Activated T-helper 2 cell treated with anti-CD3 and anti-CD28 coated beads, Interferon-gamma antibody, Interleukin-2, Interleukin-4, amounts not matched to agents 10 μg/mL and 5 μg/mL and 100 μg/mL, durations not matched to agents 14 hours and 24 hours and 36 hours (primary cell): ENCODE measurements at regions of chr13 and their contacts with region 1.

Region 1: DNA sequence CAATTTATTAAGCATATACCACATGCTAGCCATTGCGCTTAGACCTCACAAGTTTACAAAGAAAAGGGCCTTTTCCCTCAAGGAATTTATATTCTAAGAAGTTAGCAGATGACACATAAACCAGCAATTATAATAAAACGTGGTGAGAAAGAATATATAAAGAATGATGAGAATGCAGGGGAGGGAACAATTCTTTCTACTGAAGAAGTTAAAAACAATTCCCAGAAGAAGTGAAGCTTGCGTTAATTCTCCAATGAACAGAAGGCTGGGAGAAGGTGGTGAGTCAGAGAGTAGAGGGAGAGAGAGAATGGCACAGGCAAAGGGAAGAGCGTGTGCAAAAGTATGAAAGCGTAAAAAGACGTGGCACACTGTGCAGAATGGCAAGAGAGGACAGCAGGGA is 69.5 kb upstream of the ZDHHC20 start:
- DNase-seq: no peak
- H3K4me3 Mint-ChIP-seq: no peak overlapping the region
- H3K27ac Mint-ChIP-seq: no peak overlapping the region
- H3K4me1 Mint-ChIP-seq: peaks cover 8% of the 10 kb centered on the region
- H3K27me3 Mint-ChIP-seq: no peaks in the 10 kb centered on the region

Region 2: GRCh38 chr13:21297914-21298831 is 230.4 kb before region 1 on chr13:
- intact Hi-C with region 1: no loop called
- DNase-seq: peak; percentile 83
- H3K4me3 Mint-ChIP-seq: peak overlapping the region; percentile 91
- H3K27ac Mint-ChIP-seq: peak overlapping the region; percentile 87
- H3K4me1 Mint-ChIP-seq: peaks cover 21% of the 10 kb centered on the region
- H3K27me3 Mint-ChIP-seq: peaks cover 3% of the 10 kb centered on the region

Region 3: DNA sequence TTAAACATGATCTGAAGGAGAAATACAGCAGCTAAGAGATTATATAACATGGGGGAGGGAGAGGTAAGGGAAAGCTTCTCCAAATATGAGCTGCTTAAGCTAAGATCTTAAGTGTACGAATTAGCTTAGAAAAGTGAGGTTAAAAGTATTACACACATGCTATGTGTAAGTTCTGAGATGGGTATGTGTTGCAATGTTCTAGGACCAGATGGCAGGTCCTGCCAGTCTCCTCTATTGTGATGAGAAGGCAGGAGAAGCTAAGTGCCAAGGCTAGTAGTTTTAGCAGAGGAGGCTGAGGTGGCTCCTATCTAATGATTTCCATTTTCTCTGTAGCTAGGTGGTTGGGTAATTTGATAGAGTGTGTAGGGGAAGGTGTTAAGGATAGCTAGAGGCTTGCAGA is 17.8 kb after region 1 on chr13:
- intact Hi-C with region 1: loop called (anchors 2 kb)
- DNase-seq: no peak
- H3K4me3 Mint-ChIP-seq: no peak overlapping the region
- H3K27ac Mint-ChIP-seq: no peak overlapping the region
- H3K4me1 Mint-ChIP-seq: no peaks in the 10 kb centered on the region
- H3K27me3 Mint-ChIP-seq: no peaks in the 10 kb centered on the region

Region 4: GRCh38 chr13:21557995-21558394 is 29.4 kb after region 1 on chr13:
- intact Hi-C with region 1: no loop called
- DNase-seq: no peak
- H3K4me3 Mint-ChIP-seq: no peak overlapping the region
- H3K27ac Mint-ChIP-seq: no peak overlapping the region
- H3K4me1 Mint-ChIP-seq: no peaks in the 10 kb centered on the region
- H3K27me3 Mint-ChIP-seq: no peaks in the 10 kb centered on the region

Region 5: DNA sequence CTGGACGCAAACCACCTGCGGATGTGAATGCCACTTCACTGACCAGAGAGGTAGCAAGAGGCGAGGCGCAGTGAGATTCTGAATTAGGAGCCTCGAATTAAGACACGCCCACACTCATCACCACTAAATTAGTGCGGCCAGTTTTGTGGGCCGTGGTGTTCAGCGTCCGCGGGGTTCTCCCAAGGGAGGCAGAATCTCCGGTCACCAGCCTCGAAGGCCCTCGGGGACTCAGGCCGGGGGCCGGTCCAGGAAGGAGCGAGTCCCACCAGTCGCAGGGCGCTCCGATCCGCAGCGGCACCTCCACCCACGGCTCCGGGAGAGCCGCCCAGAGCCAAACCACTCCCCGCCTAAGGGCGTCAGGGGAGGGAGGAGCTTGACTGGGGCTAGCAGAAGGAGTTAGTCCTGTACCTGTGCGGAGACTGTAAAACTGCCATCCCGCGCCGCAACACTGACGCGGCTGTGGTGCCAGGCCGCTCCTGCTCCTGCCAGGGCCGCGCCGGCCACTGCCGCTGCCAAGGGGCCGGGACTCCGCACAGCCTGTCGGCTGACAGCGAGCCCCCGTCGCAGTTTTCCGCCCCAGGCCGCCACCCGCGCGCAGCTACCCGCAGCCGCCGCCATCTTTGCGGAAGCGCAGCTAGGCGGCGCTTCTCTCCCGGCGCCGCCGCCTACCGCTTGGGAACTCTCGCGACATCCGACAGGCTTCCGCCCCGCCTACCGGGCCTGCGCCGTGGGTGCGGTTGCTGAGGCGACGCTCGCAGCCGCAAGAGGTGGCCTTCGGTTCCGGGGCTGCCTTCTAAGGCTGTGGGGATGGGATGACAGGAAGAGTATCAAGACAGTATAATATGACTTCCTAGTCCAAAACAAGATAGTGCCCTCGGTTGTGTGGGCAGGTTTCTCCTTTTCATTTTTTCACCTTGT is 75.2 kb after region 1 on chr13 and contains the start of gene MICU2:
- intact Hi-C with region 1: loop called (anchors 1 kb)
- DNase-seq: peak; percentile 94
- H3K4me3 Mint-ChIP-seq: peak within 1 kb of the TSS; percentile 81
- H3K27ac Mint-ChIP-seq: peak within 1 kb of the TSS; percentile 85
- H3K4me1 Mint-ChIP-seq: peaks cover 22% of the 10 kb centered on the region
- H3K27me3 Mint-ChIP-seq: peaks cover 11% of the 10 kb centered on the region
- total RNA-seq, gene MICU2: 36.6 and 38.8 TPM in 2 replicates